Activated CD4-positive, alpha-beta memory T cell treated with anti-CD3 and anti-CD28 coated beads, Interleukin-2, amount 10 ng/mL, durations not matched to agents 7 days and 5 days (primary cell): ENCODE measurements at regions of chr15 and their contacts with region 1.

Region 1: GRCh38 chr15:66386204-66387123 is at the start of gene MAP2K1:
- DNase-seq: peak; percentile 99
- H3K4me3 Mint-ChIP-seq: peak within 1 kb of the TSS; percentile 98
- H3K27ac Mint-ChIP-seq: peak within 1 kb of the TSS; percentile 97
- H3K4me1 Mint-ChIP-seq: peaks cover 50% of the 10 kb centered on the region
- H3K27me3 Mint-ChIP-seq: no peaks in the 10 kb centered on the region
- total RNA-seq, gene MAP2K1: 87.6 to 89.0 TPM

Region 2: DNA sequence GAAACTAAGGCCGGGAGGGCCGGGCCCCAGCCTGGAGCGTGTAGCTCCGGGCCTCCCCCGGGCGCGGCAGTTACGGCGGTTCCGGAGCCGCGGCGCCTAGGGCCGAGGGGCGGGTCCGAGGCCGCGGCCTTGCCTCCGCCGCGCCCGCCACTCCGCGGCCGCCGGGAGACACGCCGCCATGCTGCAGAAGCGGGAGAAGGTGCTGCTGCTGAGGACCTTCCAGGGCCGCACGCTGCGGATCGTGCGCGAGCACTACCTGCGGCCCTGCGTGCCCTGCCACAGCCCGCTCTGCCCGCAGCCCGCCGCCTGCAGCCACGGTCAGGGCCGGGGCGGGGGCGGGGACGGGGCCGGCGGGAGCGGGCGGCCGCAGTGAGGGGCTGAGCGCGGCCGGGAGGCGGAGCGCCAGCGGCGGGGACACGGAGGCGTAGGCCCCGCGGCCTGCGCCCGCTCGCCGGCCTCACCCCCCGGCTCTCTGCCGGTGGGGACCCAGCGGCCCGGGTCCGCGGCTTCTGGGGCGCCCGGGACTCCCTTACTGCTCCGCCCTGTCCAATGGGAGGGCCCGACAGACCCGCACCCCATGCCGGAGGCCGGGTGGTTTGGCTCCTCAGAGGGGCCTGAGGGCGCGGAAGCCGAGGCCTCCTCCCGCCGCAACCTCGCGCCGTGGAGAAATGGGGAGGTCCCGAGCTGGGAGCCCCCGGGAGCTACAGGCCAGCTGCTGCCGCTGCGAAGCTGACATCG is 92.9 kb before region 1 on chr15 and contains the start of gene DIS3L:
- CTCF ChIA-PET with region 1: interaction called, 6 read pairs
- POLR2A ChIA-PET with region 1: interaction called, 14 read pairs
- DNase-seq: peak; percentile 68
- H3K4me3 Mint-ChIP-seq: peak within 1 kb of the TSS; percentile 83
- H3K27ac Mint-ChIP-seq: peak within 1 kb of the TSS; percentile 91
- H3K4me1 Mint-ChIP-seq: peaks cover 52% of the 10 kb centered on the region
- H3K27me3 Mint-ChIP-seq: no peaks in the 10 kb centered on the region
- total RNA-seq, gene DIS3L: 24.0 to 24.9 TPM

Region 3: GRCh38 chr15:66369773-66370651 is 16.5 kb before region 1 on chr15:
- CTCF ChIA-PET with region 1: interaction called, 19 read pairs
- POLR2A ChIA-PET with region 1: interaction called, 8 read pairs
- DNase-seq: peak; percentile 51
- H3K4me3 Mint-ChIP-seq: peak overlapping the region; percentile 54
- H3K27ac Mint-ChIP-seq: peak overlapping the region; percentile 80
- H3K4me1 Mint-ChIP-seq: peaks cover 22% of the 10 kb centered on the region
- H3K27me3 Mint-ChIP-seq: no peaks in the 10 kb centered on the region

Region 4: GRCh38 chr15:66411190-66411589 is 24.7 kb after region 1 on chr15:
- CTCF ChIA-PET with region 1: interaction called, 4 read pairs
- POLR2A ChIA-PET with region 1: interaction called, 16 read pairs
- DNase-seq: no peak
- H3K4me3 Mint-ChIP-seq: peak overlapping the region; percentile 42
- H3K27ac Mint-ChIP-seq: peak overlapping the region; percentile 76
- H3K4me1 Mint-ChIP-seq: peaks cover 74% of the 10 kb centered on the region
- H3K27me3 Mint-ChIP-seq: no peaks in the 10 kb centered on the region

Region 5: DNA sequence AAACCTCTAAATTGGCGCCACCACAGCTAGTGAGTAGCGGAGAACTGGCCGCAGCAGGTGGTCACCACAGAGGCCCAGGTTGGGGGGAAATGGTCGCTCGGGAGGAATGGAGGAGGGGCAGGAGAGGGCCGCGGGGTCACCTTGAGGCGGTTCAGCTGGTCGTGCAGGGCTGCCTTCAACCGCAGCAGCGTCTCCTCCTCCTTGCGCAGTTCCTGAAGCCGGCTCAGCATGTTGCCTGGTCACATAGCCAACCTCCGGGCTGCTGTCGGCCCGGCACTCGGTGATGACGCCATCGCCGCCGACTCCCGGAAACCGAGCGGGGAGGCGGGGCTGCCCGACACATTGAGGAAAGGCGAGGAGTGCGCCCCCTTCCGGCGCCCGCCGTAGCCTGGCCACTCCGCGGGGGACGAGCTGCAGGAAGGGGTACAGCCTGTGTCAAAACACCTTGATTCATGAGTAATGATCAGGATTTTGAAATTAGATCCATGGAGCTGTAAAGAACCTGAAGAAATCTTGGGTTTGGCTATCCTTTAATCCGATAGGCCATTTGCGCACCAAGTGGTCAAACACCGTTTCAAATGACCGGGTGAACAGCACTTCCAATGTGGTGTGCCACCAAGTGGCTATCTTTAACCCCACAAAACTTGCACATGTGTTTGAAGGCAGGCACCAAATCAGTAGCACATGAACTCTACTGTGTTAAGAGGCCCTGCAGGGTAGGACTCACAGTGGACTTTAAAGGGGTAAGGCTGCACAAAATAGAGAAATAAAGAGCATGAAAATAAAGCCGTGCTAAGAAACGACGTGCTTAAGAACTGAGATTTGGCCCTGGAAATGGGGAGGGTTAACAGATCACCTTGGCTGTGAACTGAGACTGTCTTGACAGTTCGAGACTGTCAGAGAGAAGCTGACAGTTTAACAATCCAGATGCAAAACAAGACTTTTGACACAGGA is 111.3 kb after region 1 on chr15 and contains the start of gene SNAPC5:
- CTCF ChIA-PET with region 1: interaction called, 127 read pairs
- POLR2A ChIA-PET with region 1: interaction called, 110 read pairs
- DNase-seq: peak; percentile 98
- H3K4me3 Mint-ChIP-seq: peak within 1 kb of the TSS; percentile 91
- H3K27ac Mint-ChIP-seq: peak within 1 kb of the TSS; percentile 88
- H3K4me1 Mint-ChIP-seq: peaks cover 70% of the 10 kb centered on the region
- H3K27me3 Mint-ChIP-seq: no peaks in the 10 kb centered on the region
- total RNA-seq, gene SNAPC5: 16.7 to 17.2 TPM